BJ (cell line): ENCODE measurements at regions of chr4 and their contacts with region 1.

Region 1: GRCh38 chr4:75995727-75996126 is 5.0 kb upstream of the SDAD1 start:
- DNase-seq: no peak
- H3K4me3 ChIP-seq: no peak overlapping the region
- H3K27me3 ChIP-seq: no peaks in the 10 kb centered on the region; the same call in 1 of the 2 replicates
- CTCF ChIP-seq: peak; percentile 62

Region 2: GRCh38 chr4:75881476-75881875 is 114.3 kb before region 1 on chr4:
- CTCF ChIA-PET with region 1: no interaction called
- POLR2A ChIA-PET with region 1: no interaction called
- DNase-seq: no peak
- H3K4me3 ChIP-seq: no peak overlapping the region
- H3K27me3 ChIP-seq: peaks cover 1% of the 10 kb centered on the region; the same call in 1 of the 2 replicates
- CTCF ChIP-seq: no peak

Region 3: GRCh38 chr4:76061982-76062381 is 66.3 kb after region 1 on chr4:
- CTCF ChIA-PET with region 1: interaction called, 23 read pairs
- POLR2A ChIA-PET with region 1: no interaction called
- DNase-seq: no peak
- H3K4me3 ChIP-seq: no peak overlapping the region
- H3K27me3 ChIP-seq: peaks cover 5% of the 10 kb centered on the region
- CTCF ChIP-seq: no peak

Region 4: DNA sequence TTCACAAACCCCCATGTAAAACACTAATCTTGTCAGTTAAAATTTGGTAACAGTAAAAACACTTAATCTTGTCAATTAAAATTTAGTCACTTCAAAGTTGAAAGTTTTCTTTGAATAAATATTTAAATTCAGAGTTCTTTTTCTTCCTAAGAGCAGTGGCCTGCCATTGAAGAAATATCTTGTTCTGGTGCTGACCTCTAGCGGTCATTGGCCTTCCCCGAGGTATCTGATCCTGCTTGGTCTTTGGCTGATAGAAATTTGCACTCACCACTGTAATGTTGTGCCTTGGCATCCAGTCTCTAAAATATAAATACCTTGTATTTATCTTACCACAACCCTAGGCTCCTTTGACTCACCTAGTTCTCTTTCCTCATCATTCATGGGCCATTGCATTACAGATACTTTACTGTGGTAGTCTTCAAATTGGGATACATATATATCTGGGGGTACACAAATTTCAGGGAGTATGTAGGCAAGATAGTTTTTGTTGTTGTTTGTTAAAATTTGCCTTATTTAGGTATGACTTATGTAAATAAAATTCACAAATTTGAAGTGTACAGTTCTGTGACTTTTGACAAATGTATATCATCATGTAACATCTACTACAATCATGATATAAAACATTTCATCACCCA is 72.0 kb after region 1 on chr4:
- CTCF ChIA-PET with region 1: interaction called, 23 read pairs
- POLR2A ChIA-PET with region 1: no interaction called
- DNase-seq: peak; percentile 9
- H3K4me3 ChIP-seq: no peak overlapping the region
- H3K27me3 ChIP-seq: 0 out of 2 replicates have a peak, but pooled peaks cover 1% of the 10 kb centered on the region
- CTCF ChIP-seq: peak; percentile 83

Region 5: GRCh38 chr4:76087007-76087769 is 91.5 kb after region 1 on chr4:
- CTCF ChIA-PET with region 1: interaction called, 12 read pairs
- POLR2A ChIA-PET with region 1: no interaction called
- DNase-seq: no peak
- H3K4me3 ChIP-seq: no peak overlapping the region
- H3K27me3 ChIP-seq: peaks cover 7% of the 10 kb centered on the region
- CTCF ChIP-seq: peak; percentile 74